Activated naive CD8-positive, alpha-beta T cell treated with anti-CD3 and anti-CD28 coated beads, Interleukin-2, amount 10 ng/mL, durations not matched to agents 7 days and 5 days (primary cell): ENCODE measurements at regions of chr22 and their contacts with region 1.

Region 1: DNA sequence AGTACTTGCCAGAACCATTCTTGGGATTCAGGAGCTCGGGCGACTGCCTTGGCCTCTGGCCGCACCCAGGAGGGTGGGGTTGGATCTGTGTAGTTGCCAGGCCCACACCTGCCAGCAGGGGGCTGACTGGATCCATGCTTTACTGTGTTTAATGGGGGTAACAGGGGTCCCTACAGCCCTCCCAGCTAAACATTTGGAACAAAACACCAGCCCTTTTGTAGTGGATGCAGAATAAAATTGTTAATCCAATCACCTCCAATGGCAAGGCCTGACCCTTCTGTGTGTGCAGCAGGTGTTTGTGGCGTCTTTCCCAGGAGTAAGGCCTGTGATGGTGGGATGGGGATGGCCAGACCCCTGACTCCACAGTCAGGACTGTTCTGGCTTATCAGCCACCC is 22.5 kb downstream of the SUN2 start:
- DNase-seq: peak; percentile 68
- ATAC-seq: peak; percentile 51
- H3K4me3 Mint-ChIP-seq: no peak overlapping the region
- H3K27ac Mint-ChIP-seq: peak overlapping the region; percentile 75
- H3K4me1 Mint-ChIP-seq: peaks cover 26% of the 10 kb centered on the region
- H3K27me3 Mint-ChIP-seq: no peaks in the 10 kb centered on the region

Region 2: GRCh38 chr22:38705235-38706100 is 27.9 kb before region 1 on chr22 and contains the start of gene GTPBP1:
- POLR2A ChIA-PET with region 1: interaction called, 15 read pairs
- DNase-seq: peak; percentile 85
- ATAC-seq: peak; percentile 83
- H3K4me3 Mint-ChIP-seq: peak within 1 kb of the TSS; percentile 94
- H3K27ac Mint-ChIP-seq: peak within 1 kb of the TSS; percentile 95
- H3K4me1 Mint-ChIP-seq: peaks cover 43% of the 10 kb centered on the region
- H3K27me3 Mint-ChIP-seq: no peaks in the 10 kb centered on the region
- total RNA-seq, gene GTPBP1: 98.6 TPM

Region 3: DNA sequence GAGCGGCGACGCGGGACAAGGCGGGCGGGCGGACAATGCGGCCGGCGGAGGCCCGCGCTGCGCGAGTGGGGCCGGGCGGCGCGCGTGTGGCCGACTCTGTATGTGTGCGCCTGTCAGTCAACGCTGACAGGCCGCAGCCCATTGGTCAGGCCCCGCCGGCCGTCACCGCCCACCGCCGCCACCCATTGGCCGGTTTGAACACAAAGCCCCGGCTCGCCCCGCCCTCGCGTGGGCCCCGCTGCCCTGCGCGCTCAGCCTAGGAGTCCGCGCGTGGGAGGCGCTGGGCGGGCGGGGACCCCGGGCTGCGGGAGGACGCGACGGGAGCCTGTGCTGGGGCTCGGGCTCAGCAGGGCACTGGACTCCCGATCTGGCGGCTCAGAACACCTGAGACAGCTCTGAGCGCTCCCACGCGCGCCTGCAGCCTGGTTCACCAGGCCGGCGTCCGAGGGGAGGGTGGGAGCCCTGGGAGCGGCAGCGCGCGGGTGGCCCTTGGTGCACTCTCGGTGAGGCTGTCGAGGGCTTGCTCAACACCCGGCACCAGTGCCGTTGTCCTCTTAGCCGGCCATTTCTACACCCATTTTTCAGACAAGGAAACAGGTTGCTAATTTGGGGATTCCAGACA is 22.7 kb after region 1 on chr22 and contains the start of gene SUN2:
- POLR2A ChIA-PET with region 1: interaction called, 386 read pairs
- DNase-seq: peak; percentile 96
- ATAC-seq: peak; percentile 73
- H3K4me3 Mint-ChIP-seq: peak within 1 kb of the TSS; percentile 98
- H3K27ac Mint-ChIP-seq: peak within 1 kb of the TSS; percentile 99
- H3K4me1 Mint-ChIP-seq: peaks cover 43% of the 10 kb centered on the region
- H3K27me3 Mint-ChIP-seq: no peaks in the 10 kb centered on the region
- total RNA-seq, gene SUN2: 607 to 626 TPM

Region 4: GRCh38 chr22:38766076-38766777 is 32.9 kb after region 1 on chr22:
- POLR2A ChIA-PET with region 1: interaction called, 386 read pairs
- DNase-seq: peak; percentile 55
- ATAC-seq: peak; percentile 46
- H3K4me3 Mint-ChIP-seq: no peak overlapping the region
- H3K27ac Mint-ChIP-seq: no peak overlapping the region
- H3K4me1 Mint-ChIP-seq: peaks cover 4% of the 10 kb centered on the region
- H3K27me3 Mint-ChIP-seq: no peaks in the 10 kb centered on the region

Region 5: DNA sequence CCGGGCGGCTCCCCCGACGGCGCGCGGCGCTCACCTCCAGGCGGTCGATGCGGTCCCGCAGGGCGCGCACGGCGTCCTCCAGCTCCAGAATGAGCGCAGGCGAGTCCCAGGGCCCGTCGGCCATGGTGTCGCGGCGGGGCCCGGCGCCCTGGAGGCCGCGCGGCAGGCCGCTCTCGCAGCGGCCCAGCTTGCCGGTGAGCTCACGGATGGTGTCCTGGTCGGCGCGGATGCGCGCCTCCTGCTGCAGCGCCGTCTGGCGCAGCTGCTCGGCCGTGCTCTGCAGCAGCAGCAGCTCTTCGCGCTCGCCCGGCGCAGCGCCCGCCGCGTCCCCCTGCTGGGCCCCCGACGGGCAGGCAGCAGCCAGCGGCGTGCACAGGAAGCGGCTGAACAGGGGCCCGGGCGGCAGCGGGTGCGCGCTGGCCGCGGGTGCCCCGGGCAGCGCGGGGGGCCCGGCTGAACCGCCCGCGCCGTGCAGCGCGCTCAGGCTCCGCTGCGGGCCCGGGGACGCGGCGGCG is 109.9 kb after region 1 on chr22:
- POLR2A ChIA-PET with region 1: interaction called, 10 read pairs
- DNase-seq: peak; percentile 74
- ATAC-seq: peak; percentile 90
- H3K4me3 Mint-ChIP-seq: no peak overlapping the region
- H3K27ac Mint-ChIP-seq: no peak overlapping the region
- H3K4me1 Mint-ChIP-seq: peaks cover 5% of the 10 kb centered on the region
- H3K27me3 Mint-ChIP-seq: peaks cover 63% of the 10 kb centered on the region

Region 6: DNA sequence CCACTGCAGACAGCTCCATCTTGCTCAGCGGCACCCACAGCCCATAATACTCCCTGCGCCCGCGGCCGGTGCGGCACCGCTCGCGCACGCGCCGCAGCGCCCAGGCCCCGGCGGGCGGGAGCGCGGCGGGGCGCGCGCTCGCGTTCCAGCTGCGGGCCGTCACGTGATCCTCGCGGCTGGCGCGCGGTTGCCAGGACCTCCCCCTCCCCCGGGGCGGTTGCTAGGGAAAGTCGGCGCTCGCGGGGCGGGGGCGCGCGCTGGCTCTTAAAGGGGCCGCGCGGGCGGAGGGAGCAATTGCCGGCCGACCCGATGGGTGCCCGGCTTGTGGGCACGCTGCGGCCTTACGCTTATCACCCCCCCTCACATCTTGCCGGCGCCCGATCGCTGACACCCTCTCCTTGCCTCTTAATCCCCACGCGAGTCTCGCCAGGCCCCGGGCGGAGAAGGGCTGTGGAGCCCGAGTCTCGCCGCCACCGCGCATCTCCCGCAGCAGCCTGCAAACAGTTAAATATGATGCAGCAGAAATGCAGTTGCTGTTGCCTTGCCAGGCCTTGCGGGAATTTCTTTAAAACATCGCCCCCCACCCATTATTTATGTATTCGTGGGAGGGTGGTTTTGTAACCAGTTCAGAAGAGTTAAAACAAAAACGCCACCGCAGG is 139.0 kb after region 1 on chr22 and contains the start of gene CBX6:
- POLR2A ChIA-PET with region 1: no interaction called
- DNase-seq: peak; percentile 99
- ATAC-seq: peak; percentile 76
- H3K4me3 Mint-ChIP-seq: peak within 1 kb of the TSS; percentile 90
- H3K27ac Mint-ChIP-seq: peak within 1 kb of the TSS; percentile 88
- H3K4me1 Mint-ChIP-seq: peaks cover 34% of the 10 kb centered on the region
- H3K27me3 Mint-ChIP-seq: peaks cover 20% of the 10 kb centered on the region
- total RNA-seq, gene CBX6: 66.0 to 66.4 TPM